Naive thymus-derived CD4-positive, alpha-beta T cell (primary cell): ENCODE measurements at regions of chr5 and their contacts with region 1.

Region 1: DNA sequence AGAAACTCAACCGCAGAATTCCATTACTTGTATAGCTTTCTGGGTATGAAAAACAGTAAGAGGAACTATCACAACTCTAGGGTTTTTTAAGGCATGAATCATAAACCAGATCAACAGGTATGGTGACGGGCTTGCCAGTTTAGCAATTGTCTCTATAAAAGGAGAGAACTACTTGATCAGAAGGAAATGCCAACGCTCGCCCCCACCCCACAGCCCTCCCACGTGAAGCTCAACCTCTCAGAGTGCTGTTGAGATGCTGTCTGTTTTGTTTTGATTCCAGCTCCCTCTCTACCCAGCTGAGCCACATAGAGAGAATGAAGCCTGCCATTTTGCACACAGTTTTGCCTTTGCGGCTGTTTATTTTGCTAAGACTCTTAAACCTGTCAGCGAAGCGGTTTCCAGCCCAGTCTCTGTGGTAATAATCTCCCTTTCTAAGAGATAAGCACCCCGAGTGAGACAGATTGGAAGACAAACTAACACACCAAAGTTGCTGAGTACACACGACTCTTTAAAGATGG is 257.9 kb upstream of the ANKRD55 start:
- DNase-seq: peak in 8 of 9 donors; percentile 33 to 68 (median 44)
- ATAC-seq: peak; percentile 81
- H3K4me3 ChIP-seq: no peak overlapping the region
- H3K4me3 Mint-ChIP-seq: peak overlapping the region; percentile 31 to 76 (median 64)
- H3K27ac ChIP-seq: no peak overlapping the region
- H3K27ac Mint-ChIP-seq: peak overlapping the region; percentile 56 to 96 (median 83)
- H3K4me1 ChIP-seq: peaks cover 0 to 17% of the 10 kb centered on the region in 2 donors
- H3K4me1 Mint-ChIP-seq: peaks cover 13 to 36% (median 28%) of the 10 kb centered on the region in 7 donors
- H3K27me3 ChIP-seq: no peaks in the 10 kb centered on the region
- H3K27me3 Mint-ChIP-seq: peaks cover 0 to 4% (median 0%) of the 10 kb centered on the region in 5 donors

Region 2: DNA sequence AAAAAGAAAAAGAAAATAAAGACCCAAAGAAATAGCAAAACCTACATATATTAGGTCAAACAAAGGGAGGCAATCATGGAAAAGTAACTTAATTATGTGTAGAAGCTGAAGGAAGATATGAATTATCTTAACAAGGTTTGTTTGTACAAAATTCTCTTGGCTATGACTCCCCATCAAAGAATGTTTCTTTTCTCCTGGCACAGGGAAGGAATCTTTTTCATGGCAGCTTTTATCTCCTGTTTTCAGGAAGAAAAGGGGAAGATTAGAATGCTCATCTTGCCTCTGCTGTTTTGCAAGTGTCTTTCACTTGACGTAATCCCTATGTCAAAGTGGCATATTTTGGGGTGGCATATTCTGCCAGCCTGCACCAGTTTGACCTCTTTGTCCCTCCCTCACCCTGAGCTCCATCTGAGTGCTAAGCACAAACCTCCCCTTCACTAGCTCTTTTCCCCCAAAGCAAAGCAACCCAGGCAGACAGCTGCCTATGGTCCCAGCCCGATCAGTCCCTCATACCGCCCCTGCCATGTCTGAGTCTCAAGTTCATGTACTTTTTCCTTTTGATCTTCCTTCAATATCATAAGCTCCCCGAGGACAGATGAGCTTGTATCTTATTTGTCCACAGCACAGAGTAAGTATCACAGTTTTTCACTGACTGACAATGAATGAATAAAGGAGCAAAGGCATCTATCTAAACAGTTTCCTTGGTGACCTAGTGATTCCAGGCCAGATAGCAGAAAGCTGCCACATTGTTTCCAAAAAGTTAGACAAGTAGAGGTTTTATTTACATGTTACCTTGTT is 15.1 kb before region 1 on chr5:
- CTCF ChIA-PET with region 1: interaction called, 5 read pairs
- POLR2A ChIA-PET with region 1: interaction called, 27 read pairs
- intact Hi-C with region 1: loop called in 1 of 2 experiments (anchors 2 kb)
- DNase-seq: no peak
- ATAC-seq: no peak
- H3K4me3 ChIP-seq: no peak overlapping the region
- H3K4me3 Mint-ChIP-seq: no peak overlapping the region
- H3K27ac ChIP-seq: no peak overlapping the region
- H3K27ac Mint-ChIP-seq: peak overlapping the region in 4 of 9 donors; percentile 3 to 34 (median 5)
- H3K4me1 ChIP-seq: peaks cover 0 to 32% of the 10 kb centered on the region in 2 donors
- H3K4me1 Mint-ChIP-seq: peaks cover 21 to 45% (median 37%) of the 10 kb centered on the region in 7 donors
- H3K27me3 ChIP-seq: no peaks in the 10 kb centered on the region
- H3K27me3 Mint-ChIP-seq: no peaks in the 10 kb centered on the region

Region 3: DNA sequence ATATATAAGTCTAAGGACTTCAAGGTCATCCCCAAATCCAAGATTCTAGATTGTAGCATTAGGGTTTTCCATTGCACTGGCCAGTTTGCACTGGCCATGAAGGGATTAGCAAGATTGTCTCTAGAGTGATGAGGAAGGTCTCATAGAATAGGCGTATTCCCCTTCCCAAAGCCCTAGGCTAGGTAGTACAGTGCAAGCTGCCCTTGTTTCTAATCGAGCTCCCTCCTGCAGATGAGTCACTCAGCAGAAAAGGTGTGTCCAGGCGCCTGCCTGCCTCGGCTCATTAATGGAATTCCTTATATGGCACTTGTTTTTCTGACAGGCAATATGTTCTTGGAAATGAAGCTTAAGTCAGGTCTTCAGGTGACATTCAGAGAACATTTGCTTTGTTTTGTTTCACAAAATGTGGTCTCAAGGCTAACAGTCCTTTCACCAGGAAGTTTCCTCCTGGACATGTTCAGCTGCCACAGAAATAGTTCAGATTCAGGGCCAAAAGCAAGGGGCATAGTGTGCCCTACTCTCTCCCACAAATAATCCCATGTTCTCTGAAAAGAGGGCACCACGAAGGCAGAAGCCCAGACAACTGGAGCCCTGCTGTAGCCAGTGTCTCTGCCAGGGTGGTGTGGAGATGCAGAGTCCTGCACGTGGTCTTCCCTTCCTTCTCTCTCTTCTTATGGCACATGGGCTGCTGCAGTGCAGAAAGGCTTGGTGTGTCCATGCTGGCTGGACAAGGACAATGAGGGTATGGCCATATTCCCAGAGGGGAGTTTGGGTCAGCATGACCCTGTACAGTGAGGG is 43.2 kb after region 1 on chr5:
- CTCF ChIA-PET with region 1: no interaction called
- POLR2A ChIA-PET with region 1: no interaction called
- intact Hi-C with region 1: loop called in 1 of 2 experiments (anchors 5 kb)
- DNase-seq: peak in 2 of 9 donors; percentile 13 to 32
- ATAC-seq: no peak
- H3K4me3 ChIP-seq: no peak overlapping the region
- H3K4me3 Mint-ChIP-seq: peak overlapping the region in 3 of 10 donors; percentile 12 to 36 (median 26)
- H3K27ac ChIP-seq: no peak overlapping the region
- H3K27ac Mint-ChIP-seq: peak overlapping the region in 4 of 9 donors; percentile 59 to 78 (median 69)
- H3K4me1 ChIP-seq: peaks cover 0 to 12% of the 10 kb centered on the region in 2 donors
- H3K4me1 Mint-ChIP-seq: peaks cover 10 to 39% (median 26%) of the 10 kb centered on the region in 7 donors
- H3K27me3 ChIP-seq: no peaks in the 10 kb centered on the region
- H3K27me3 Mint-ChIP-seq: no peaks in the 10 kb centered on the region